ENCODE measurements at regions of chr10 and their contacts with region 1.

Region 1: DNA sequence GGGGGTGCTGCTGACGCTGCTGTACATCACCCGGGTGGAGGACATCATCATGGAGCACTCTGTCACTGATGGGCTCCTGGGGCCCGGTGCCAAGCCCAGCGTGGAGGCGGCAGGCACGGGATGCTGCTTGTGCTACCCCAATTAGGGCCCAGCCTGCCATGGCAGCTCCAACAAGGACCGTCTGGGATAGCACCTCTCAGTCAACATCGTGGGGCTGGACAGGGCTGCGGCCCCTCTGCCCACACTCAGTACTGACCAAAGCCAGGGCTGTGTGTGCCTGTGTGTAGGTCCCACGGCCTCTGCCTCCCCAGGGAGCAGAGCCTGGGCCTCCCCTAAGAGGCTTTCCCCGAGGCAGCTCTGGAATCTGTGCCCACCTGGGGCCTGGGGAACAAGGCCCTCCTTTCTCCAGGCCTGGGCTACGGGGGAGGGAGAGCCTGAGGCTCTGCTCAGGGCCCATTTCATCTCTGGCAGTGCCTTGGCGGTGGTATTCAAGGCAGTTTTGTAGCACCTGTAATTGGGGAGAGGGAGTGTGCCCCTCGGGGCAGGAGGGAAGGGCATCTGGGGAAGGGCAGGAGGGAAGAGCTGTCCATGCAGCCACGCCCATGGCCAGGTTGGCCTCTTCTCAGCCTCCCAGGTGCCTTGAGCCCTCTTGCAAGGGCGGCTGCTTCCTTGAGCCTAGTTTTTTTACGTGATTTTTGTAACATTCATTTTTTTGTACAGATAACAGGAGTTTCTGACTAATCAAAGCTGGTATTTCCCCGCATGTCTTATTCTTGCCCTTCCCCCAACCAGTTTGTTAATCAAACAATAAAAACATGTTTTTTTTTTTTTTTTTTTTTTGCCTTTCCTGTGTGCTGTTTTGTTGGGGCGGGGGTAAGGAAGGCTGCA is 55.8 kb downstream of the TSPAN15 start:
- DNase-seq: peak in 3 of 14 experiments; percentile 53 to 71 (median 65)
- ATAC-seq: peak; percentile 20
- H3K4me3 ChIP-seq: peak overlapping the region; percentile 22
- H3K4me3 Mint-ChIP-seq: peak overlapping the region; percentile 46
- H3K27ac ChIP-seq: peak overlapping the region; percentile 19 to 59
- H3K27ac Mint-ChIP-seq: peak overlapping the region; percentile 85
- H3K4me1 ChIP-seq: peaks cover 18% of the 10 kb centered on the region
- H3K4me1 Mint-ChIP-seq: peaks cover 11% of the 10 kb centered on the region
- H3K27me3 ChIP-seq: no peaks in the 10 kb centered on the region
- H3K27me3 Mint-ChIP-seq: peaks cover 3% of the 10 kb centered on the region
- CTCF ChIP-seq: no peak

Region 2: GRCh38 chr10:69425511-69426298 is 81.4 kb before region 1 on chr10:
- CTCF ChIA-PET with region 1: interaction called, 4 read pairs
- POLR2A ChIA-PET with region 1: interaction called, 4 read pairs
- intact Hi-C with region 1: loop called in 1 of 2 experiments (anchors 5 kb)
- DNase-seq: peak in 12 of 14 experiments; percentile 16 to 89 (median 40)
- ATAC-seq: peak; percentile 92
- H3K4me3 ChIP-seq: no peak overlapping the region
- H3K4me3 Mint-ChIP-seq: peak overlapping the region; percentile 16
- H3K27ac ChIP-seq: peak overlapping the region; percentile 74 to 88
- H3K27ac Mint-ChIP-seq: peak overlapping the region; percentile 82
- H3K4me1 ChIP-seq: peaks cover 67% of the 10 kb centered on the region
- H3K4me1 Mint-ChIP-seq: peaks cover 61% of the 10 kb centered on the region
- H3K27me3 ChIP-seq: no peaks in the 10 kb centered on the region
- H3K27me3 Mint-ChIP-seq: no peaks in the 10 kb centered on the region
- CTCF ChIP-seq: no peak

Region 3: GRCh38 chr10:69451209-69451783 is 55.8 kb before region 1 on chr10 and contains the start of gene TSPAN15:
- CTCF ChIA-PET with region 1: interaction called, 5 read pairs
- POLR2A ChIA-PET with region 1: interaction called, 3 read pairs
- intact Hi-C with region 1: loop called in 1 of 2 experiments (anchors 2 kb)
- DNase-seq: peak; percentile 61 to 90 (median 79)
- ATAC-seq: peak; percentile 96
- H3K4me3 ChIP-seq: peak within 1 kb of the TSS; percentile 84
- H3K4me3 Mint-ChIP-seq: peak within 1 kb of the TSS; percentile 92
- H3K27ac ChIP-seq: no peak within 1 kb of the TSS
- H3K27ac Mint-ChIP-seq: peak within 1 kb of the TSS; percentile 34
- H3K4me1 ChIP-seq: peaks cover 33% of the 10 kb centered on the region
- H3K4me1 Mint-ChIP-seq: peaks cover 27% of the 10 kb centered on the region
- H3K27me3 ChIP-seq: no peaks in the 10 kb centered on the region
- H3K27me3 Mint-ChIP-seq: no peaks in the 10 kb centered on the region
- CTCF ChIP-seq: no peak
- total RNA-seq, gene TSPAN15: 2.2 to 2.5 TPM